ENCODE measurements at regions of chr11 and their contacts with region 1.

Region 1: GRCh38 chr11:126211235-126212088 is at the starts of genes FAM118B and RPUSD4:
- DNase-seq: peak; percentile 100
- H3K4me3 ChIP-seq: peak within 1 kb of the TSS; percentile 69 to 89 (median 80)
- H3K27ac ChIP-seq: peak within 1 kb of the TSS; percentile 76 to 83 (median 78)
- H3K4me1 ChIP-seq: peaks cover 20 to 34% (median 25%) of the 10 kb centered on the region in 4 donors
- H3K27me3 ChIP-seq: no peaks in the 10 kb centered on the region
- CTCF ChIP-seq: peak in 1 of 3 experiments; percentile 16
- EP300 ChIP-seq: no peak
- POLR2A ChIP-seq: peak; percentile 60
- total RNA-seq, gene FAM118B: 14.1 to 22.8 (median 17.9) TPM
- total RNA-seq, gene RPUSD4: 15.0 to 19.9 (median 17.6) TPM

Region 2: GRCh38 chr11:126268708-126269579 is 57.5 kb after region 1 on chr11 and contains the starts of genes FOXRED1 and SRPRA:
- intact Hi-C with region 1: loop called (anchors 5 kb)
- DNase-seq: peak; percentile 100
- H3K4me3 ChIP-seq: peak within 1 kb of the TSS; percentile 69 to 92 (median 84)
- H3K27ac ChIP-seq: peak within 1 kb of the TSS; percentile 87 to 95 (median 91)
- H3K4me1 ChIP-seq: peaks cover 18 to 34% (median 21%) of the 10 kb centered on the region in 4 donors
- H3K27me3 ChIP-seq: no peaks in the 10 kb centered on the region
- CTCF ChIP-seq: peak in 1 of 3 experiments; percentile 5
- EP300 ChIP-seq: no peak
- POLR2A ChIP-seq: peak; percentile 49
- total RNA-seq, gene FOXRED1: 10.9 to 13.1 (median 12.2) TPM
- total RNA-seq, gene SRPRA: 52.7 to 82.0 (median 77.7) TPM

Measured in esophagus muscularis mucosa (tissue), 4 donors.